ENCODE measurements at regions of chr6 and their contacts with region 1.

Region 1: GRCh38 chr6:2848851-2849250 is 7.2 kb upstream of the SERPINB1 start:
- DNase-seq: no peak
- H3K4me3 ChIP-seq: no peak overlapping the region
- H3K27ac ChIP-seq: no peak overlapping the region
- H3K4me1 ChIP-seq: peaks cover 7 to 16% (median 8%) of the 10 kb centered on the region in 4 experiments
- H3K27me3 ChIP-seq: no peaks in the 10 kb centered on the region

Region 2: GRCh38 chr6:2831392-2831791 is 17.5 kb before region 1 on chr6:
- CTCF ChIA-PET with region 1: interaction called, 10 read pairs
- POLR2A ChIA-PET with region 1: no interaction called
- DNase-seq: no peak
- H3K4me3 ChIP-seq: no peak overlapping the region
- H3K27ac ChIP-seq: peak overlapping the region in 1 of 2 experiments; percentile 15
- H3K4me1 ChIP-seq: peaks cover 5 to 34% (median 11%) of the 10 kb centered on the region in 4 experiments
- H3K27me3 ChIP-seq: no peaks in the 10 kb centered on the region

Region 3: GRCh38 chr6:2900821-2901644 is 52.2 kb after region 1 on chr6:
- CTCF ChIA-PET with region 1: interaction called, 28 read pairs
- POLR2A ChIA-PET with region 1: interaction called, 4 read pairs
- DNase-seq: no peak
- H3K4me3 ChIP-seq: peak overlapping the region in 3 of 7 experiments; percentile 41 to 88 (median 85)
- H3K27ac ChIP-seq: no peak overlapping the region
- H3K4me1 ChIP-seq: peaks cover 0 to 51% (median 34%) of the 10 kb centered on the region in 4 experiments
- H3K27me3 ChIP-seq: no peaks in the 10 kb centered on the region

Region 4: GRCh38 chr6:2911171-2911570 is 62.3 kb after region 1 on chr6:
- CTCF ChIA-PET with region 1: interaction called, 22 read pairs
- POLR2A ChIA-PET with region 1: interaction called, 4 read pairs
- DNase-seq: peak in 2 of 3 donors; percentile 39 to 56
- H3K4me3 ChIP-seq: no peak overlapping the region
- H3K27ac ChIP-seq: no peak overlapping the region
- H3K4me1 ChIP-seq: peaks cover 3 to 28% (median 20%) of the 10 kb centered on the region in 4 experiments
- H3K27me3 ChIP-seq: no peaks in the 10 kb centered on the region

Region 5: GRCh38 chr6:3108746-3109414 is 260.0 kb after region 1 on chr6:
- CTCF ChIA-PET with region 1: no interaction called
- POLR2A ChIA-PET with region 1: no interaction called
- DNase-seq: no peak
- H3K4me3 ChIP-seq: no peak overlapping the region
- H3K27ac ChIP-seq: no peak overlapping the region
- H3K4me1 ChIP-seq: no peaks in the 10 kb centered on the region
- H3K27me3 ChIP-seq: no peaks in the 10 kb centered on the region

Region 6: DNA sequence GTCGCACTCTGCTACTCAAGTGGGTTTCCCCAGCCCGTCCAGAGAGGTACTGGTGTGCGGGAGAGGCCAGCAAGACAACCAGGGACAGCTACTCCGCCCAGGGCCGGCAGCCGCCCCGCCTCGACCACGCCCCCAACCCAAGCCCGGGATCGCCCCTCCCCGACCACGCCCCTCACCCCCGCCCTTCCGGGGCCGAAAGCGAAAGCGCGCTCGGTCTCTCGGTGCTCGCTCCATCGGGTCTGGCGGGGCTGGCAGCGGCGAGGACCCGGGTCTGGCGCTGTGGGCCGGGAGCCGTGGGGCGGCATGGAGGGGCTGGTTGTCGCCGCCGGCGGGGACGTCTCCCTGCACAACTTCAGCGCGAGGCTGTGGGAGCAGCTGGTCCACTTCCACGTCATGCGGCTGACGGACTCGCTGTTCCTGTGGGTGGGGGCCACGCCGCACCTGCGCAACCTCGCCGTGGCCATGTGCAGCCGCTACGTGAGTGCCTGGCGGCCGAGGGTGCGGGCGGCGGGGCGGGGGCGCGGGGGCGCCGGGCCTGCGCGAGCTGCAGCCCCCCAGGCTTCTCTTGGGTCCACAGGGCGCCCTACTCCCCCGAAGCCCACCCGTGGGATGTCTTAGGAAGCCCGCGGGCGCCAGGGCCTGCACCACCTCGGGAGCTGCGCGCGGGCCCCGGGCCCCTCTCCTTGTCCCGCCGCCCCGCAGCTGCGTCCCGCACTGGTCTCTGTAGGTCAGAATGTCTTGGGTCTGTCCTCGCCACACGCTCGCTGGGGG is 410.1 kb after region 1 on chr6 and contains the start of gene PSMG4:
- CTCF ChIA-PET with region 1: no interaction called
- POLR2A ChIA-PET with region 1: no interaction called
- DNase-seq: peak; percentile 84 to 91 (median 90)
- H3K4me3 ChIP-seq: peak within 1 kb of the TSS; percentile 67 to 89 (median 85)
- H3K27ac ChIP-seq: peak within 1 kb of the TSS in 1 of 2 experiments; percentile 67
- H3K4me1 ChIP-seq: peaks cover 2 to 29% (median 22%) of the 10 kb centered on the region in 4 experiments
- H3K27me3 ChIP-seq: peaks cover 0 to 10% (median 4%) of the 10 kb centered on the region in 5 experiments